WTC11 (cell line): ENCODE measurements at regions of chr6 and their contacts with region 1.

Region 1: DNA sequence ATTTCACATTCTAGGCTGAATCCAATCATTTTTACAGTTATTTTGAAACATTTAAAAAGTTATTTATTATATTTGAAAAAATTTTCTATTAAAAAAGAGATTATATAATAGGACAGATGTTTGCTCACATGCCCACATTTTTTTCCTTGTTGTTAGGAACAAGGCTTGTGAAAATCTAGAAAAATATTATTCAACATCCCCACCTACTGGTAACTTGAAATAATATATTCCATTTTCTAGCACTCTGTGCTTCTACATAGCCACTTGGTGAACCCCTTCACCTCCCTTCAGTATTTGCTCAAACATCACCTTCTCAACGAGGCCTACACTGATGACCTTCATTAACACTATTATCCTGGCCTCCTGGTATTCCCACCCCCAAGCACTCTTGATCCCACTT is 18.3 kb upstream of the GPRC6A start:
- DNase-seq: no peak
- ATAC-seq: peak; percentile 52
- H3K4me3 Mint-ChIP-seq: no peak overlapping the region
- H3K27ac Mint-ChIP-seq: no peak overlapping the region
- H3K4me1 Mint-ChIP-seq: peaks cover 5% of the 10 kb centered on the region
- H3K27me3 Mint-ChIP-seq: no peaks in the 10 kb centered on the region
- CTCF ChIP-seq: no peak

Region 2: DNA sequence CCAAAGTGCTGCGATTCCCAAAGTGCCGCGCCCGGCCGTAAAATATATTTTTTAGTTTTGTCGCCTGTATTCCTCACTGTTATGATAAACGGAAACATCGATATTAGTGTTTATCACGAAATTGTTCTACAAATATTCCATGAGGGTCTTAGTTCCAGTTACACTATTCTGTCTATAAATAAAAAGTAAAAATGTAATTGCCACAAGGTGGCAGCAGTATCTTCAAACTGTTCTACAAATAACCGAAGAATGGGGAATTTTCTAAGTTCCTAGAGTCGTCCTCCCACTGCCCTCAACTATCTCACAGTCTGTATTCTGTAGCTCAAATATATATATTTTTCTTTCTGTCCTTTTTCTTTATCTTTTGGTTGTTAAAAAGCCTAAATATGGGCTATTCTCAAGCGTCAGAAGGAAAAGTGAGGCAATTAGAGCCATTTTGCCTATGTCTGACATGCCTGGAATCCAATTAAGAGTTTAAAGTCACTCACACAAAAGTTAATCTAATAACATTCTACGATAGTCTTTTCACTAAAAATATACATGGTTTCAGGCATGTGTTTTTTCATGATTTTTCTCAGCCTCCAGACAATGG is 67.6 kb before region 1 on chr6:
- CTCF ChIA-PET with region 1: interaction called, 13 read pairs
- POLR2A ChIA-PET with region 1: interaction called, 3 read pairs
- DNase-seq: no peak
- ATAC-seq: peak; percentile 83
- H3K4me3 Mint-ChIP-seq: no peak overlapping the region
- H3K27ac Mint-ChIP-seq: no peak overlapping the region
- H3K4me1 Mint-ChIP-seq: no peaks in the 10 kb centered on the region
- H3K27me3 Mint-ChIP-seq: no peaks in the 10 kb centered on the region; the same call in 1 of the 2 replicates
- CTCF ChIP-seq: peak; percentile 20; the same call in 1 of the 2 replicates